Naive thymus-derived CD4-positive, alpha-beta T cell (primary cell): ENCODE measurements at regions of chr10 and their contacts with region 1.

Region 1: DNA sequence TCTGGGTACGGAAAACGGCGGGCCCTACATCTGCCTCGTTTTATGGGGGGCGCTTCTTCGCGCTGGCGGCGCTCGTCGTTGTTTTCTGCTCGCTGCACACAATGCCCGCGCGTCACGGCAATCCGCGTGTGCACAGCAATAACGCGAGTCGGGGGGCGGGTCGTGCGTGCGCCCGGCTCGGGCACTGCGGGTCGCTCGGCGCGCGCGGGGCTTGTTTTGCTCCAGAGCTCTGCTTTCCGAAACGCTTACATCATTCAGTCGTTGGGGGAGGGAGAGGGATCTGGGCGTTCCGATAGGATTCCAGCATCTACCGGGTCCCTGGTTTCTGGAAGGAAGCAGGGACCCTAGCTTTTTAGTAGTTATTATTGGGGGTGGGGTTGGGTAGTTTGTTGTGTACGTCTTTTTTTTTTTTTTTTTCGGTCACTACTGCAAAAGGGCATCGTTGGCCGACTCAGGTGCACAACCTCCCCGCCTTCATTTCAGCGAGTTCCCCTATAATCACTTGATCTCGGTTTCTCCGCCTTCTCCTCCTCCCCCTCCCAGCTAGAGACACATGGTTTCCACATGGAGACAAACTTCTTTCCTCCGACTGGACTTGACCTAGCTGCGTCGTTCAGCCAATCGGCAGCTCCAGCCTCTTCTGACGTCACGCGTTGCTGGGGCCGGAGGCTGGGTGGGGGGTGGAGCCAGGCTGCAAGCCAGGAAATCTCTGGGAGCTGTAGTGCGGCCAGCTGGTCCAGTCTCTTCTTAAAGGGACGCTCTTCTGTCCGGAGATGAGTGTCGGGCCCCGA is 3.5 kb downstream of the MXI1 start:
- DNase-seq: peak; percentile 81 to 92 (median 89)
- ATAC-seq: peak; percentile 76
- H3K4me3 ChIP-seq: peak overlapping the region; percentile 69
- H3K4me3 Mint-ChIP-seq: peak overlapping the region; percentile 93 to 99 (median 97)
- H3K27ac ChIP-seq: peak overlapping the region; percentile 95
- H3K27ac Mint-ChIP-seq: peak overlapping the region; percentile 95 to 99 (median 98)
- H3K4me1 ChIP-seq: peaks cover 21 to 46% of the 10 kb centered on the region in 2 donors
- H3K4me1 Mint-ChIP-seq: peaks cover 34 to 64% (median 57%) of the 10 kb centered on the region in 7 donors
- H3K27me3 ChIP-seq: no peaks in the 10 kb centered on the region
- H3K27me3 Mint-ChIP-seq: peaks cover 0 to 10% (median 7%) of the 10 kb centered on the region in 5 donors

Region 2: DNA sequence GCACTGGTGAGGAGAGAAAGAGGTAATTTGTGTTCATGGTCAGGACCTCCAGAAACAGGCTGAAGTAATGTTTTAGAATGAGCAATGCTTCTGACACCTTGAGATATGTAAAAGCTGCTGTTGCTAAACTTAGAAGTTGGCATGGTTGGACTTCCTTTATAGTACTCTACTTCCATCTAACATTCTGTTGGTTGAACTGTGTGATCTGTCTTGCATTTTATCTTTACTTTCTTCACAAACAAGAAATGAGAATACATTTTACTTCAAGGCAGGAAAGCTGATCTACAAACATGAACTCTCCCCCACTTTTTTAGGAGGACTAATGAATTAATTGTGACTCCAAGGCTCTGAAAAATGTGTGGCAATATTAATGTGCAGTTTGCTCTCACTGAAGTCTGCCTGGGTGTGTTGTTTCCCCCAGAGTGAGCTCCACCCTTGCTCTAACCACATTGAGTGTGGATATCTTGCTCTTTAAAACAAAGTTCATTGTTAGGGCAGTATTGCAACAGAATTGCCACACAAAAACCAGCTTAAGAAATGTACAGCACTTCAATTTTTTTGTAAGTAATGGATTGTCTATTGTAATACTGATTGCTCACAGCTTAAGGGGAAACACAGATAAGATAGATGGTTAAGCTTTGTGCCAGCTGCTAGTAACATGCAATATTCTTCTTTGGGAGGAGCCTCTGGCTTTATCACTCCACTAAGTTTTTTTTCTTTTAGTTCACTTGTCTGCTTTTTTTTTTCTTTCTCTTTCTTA is 134.1 kb before region 1 on chr10:
- CTCF ChIA-PET with region 1: interaction called, 3 read pairs
- POLR2A ChIA-PET with region 1: interaction called, 5 read pairs
- intact Hi-C with region 1: loop called (anchors 2 to 5 kb)
- DNase-seq: peak in 7 of 9 donors; percentile 47 to 74 (median 60)
- ATAC-seq: peak; percentile 85
- H3K4me3 ChIP-seq: peak overlapping the region; percentile 21
- H3K4me3 Mint-ChIP-seq: peak overlapping the region; percentile 73 to 92 (median 86)
- H3K27ac ChIP-seq: peak overlapping the region; percentile 56
- H3K27ac Mint-ChIP-seq: peak overlapping the region; percentile 79 to 97 (median 94)
- H3K4me1 ChIP-seq: peaks cover 69 to 84% of the 10 kb centered on the region in 2 donors
- H3K4me1 Mint-ChIP-seq: peaks cover 64 to 97% (median 87%) of the 10 kb centered on the region in 7 donors
- H3K27me3 ChIP-seq: no peaks in the 10 kb centered on the region
- H3K27me3 Mint-ChIP-seq: no peaks in the 10 kb centered on the region

Region 3: DNA sequence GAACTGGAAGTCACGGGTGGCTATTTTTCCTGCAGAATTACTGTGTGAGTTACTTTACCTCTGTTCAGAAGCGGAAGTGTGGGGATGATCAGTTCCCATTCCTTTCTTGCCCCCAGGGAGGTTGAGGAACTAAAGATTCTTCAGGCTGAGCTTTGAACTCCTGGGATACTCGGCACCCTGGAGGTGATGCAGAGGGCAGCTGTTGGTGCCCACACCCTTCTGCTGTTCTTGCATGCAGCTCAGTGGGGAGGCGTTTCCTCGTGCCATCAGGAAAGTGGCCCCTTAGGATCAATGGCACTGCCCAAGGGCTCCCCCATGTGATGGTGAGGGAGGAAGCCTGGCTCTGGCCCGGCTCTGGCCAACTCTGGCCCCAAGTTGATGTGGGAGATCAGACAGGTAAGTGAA is 48.1 kb before region 1 on chr10:
- CTCF ChIA-PET with region 1: interaction called, 4 read pairs
- POLR2A ChIA-PET with region 1: interaction called, 41 read pairs
- intact Hi-C with region 1: loop called (anchors 1 to 2 kb)
- DNase-seq: no peak
- ATAC-seq: no peak
- H3K4me3 ChIP-seq: no peak overlapping the region
- H3K4me3 Mint-ChIP-seq: no peak overlapping the region
- H3K27ac ChIP-seq: no peak overlapping the region
- H3K27ac Mint-ChIP-seq: no peak overlapping the region
- H3K4me1 ChIP-seq: peaks cover 0 to 7% of the 10 kb centered on the region in 2 donors
- H3K4me1 Mint-ChIP-seq: peaks cover 0 to 11% (median 3%) of the 10 kb centered on the region in 7 donors
- H3K27me3 ChIP-seq: peaks cover 0 to 24% of the 10 kb centered on the region in 2 donors
- H3K27me3 Mint-ChIP-seq: peaks cover 38 to 93% (median 51%) of the 10 kb centered on the region in 5 donors

Region 4: DNA sequence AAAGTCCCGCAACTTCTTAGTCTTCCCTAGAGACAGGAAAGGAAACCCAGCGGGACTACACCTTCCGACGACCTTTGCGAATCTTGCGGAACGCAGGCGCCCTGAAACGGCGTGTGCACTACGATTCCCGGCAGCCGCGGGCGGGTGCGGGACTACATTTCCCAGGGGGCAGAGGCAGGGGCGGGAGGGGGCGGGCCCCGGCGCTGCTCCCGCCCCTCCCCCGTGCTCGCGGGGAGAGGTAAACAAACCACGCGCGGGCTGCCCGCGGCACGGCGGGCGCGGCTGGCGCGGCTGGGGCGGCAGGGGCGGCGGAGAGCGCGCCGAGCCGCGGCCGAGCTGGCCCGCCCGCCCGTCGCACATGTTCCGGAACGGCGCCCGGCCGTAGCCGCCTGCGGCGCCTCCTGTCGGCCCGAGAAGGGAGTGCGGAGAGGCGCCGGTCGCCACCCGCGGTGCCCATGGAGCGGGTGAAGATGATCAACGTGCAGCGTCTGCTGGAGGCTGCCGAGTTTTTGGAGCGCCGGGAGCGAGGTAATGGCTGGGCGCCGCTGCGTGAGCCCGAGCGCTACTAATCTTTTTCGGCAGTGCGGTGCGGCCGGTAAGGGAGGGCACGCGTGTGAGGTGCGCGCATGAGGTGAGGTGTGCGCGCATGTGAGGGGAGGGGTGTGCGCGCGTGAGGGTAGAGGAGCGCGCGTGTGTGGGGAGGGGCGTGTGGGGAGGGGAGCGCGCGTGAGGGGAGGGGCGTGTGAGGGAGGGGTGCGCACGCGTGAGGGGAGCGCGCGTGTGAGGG is 15.1 kb after region 1 on chr10:
- CTCF ChIA-PET with region 1: interaction called, 95 read pairs
- POLR2A ChIA-PET with region 1: interaction called, 353 read pairs
- intact Hi-C with region 1: loop called (anchors 1 kb)
- DNase-seq: peak; percentile 83 to 91 (median 88)
- ATAC-seq: peak; percentile 73
- H3K4me3 ChIP-seq: peak overlapping the region; percentile 75
- H3K4me3 Mint-ChIP-seq: peak overlapping the region; percentile 87 to 99 (median 94)
- H3K27ac ChIP-seq: peak overlapping the region; percentile 92
- H3K27ac Mint-ChIP-seq: peak overlapping the region; percentile 78 to 97 (median 96)
- H3K4me1 ChIP-seq: peaks cover 16 to 27% of the 10 kb centered on the region in 2 donors
- H3K4me1 Mint-ChIP-seq: peaks cover 27 to 68% (median 49%) of the 10 kb centered on the region in 7 donors
- H3K27me3 ChIP-seq: no peaks in the 10 kb centered on the region
- H3K27me3 Mint-ChIP-seq: no peaks in the 10 kb centered on the region

Region 5: DNA sequence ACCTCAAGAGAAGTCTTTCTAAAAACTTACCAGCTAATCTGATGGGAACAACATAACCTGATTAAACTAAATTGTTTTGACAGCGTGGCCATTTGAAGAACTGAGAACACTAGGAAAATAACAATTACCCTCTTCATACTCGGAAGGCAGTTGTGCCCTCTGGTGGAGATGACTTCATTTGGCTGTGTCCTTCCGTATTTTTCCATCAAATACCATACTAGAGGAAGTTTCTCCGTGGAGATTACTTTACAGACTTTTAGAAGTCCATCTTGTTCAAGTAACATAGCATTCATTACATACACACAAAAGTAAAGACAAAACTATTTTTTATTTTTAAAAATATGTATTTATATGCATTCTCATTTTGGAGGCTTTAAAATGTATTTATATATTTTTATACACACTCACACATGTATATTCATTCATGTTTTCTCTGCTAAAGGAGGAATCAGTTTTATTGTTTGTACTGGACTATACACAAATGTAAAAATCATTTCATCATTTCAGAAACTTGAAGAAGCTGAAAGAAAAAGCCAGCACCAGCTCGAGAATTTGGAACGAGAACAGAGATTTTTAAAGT is 68.6 kb after region 1 on chr10:
- CTCF ChIA-PET with region 1: interaction called, 31 read pairs
- POLR2A ChIA-PET with region 1: interaction called, 26 read pairs
- intact Hi-C with region 1: loop called (anchors 1 to 2 kb)
- DNase-seq: peak in 7 of 9 donors; percentile 37 to 61 (median 56)
- ATAC-seq: peak; percentile 82
- H3K4me3 ChIP-seq: no peak overlapping the region
- H3K4me3 Mint-ChIP-seq: peak overlapping the region in 5 of 10 donors; percentile 4 to 52 (median 48)
- H3K27ac ChIP-seq: no peak overlapping the region
- H3K27ac Mint-ChIP-seq: peak overlapping the region in 3 of 9 donors; percentile 8 to 59 (median 48)
- H3K4me1 ChIP-seq: peaks cover 0 to 6% of the 10 kb centered on the region in 2 donors
- H3K4me1 Mint-ChIP-seq: peaks cover 14 to 42% (median 21%) of the 10 kb centered on the region in 7 donors
- H3K27me3 ChIP-seq: no peaks in the 10 kb centered on the region
- H3K27me3 Mint-ChIP-seq: peaks cover 0 to 22% (median 0%) of the 10 kb centered on the region in 5 donors

Region 6: GRCh38 chr10:110502851-110503301 is 292.0 kb after region 1 on chr10:
- CTCF ChIA-PET with region 1: no interaction called
- POLR2A ChIA-PET with region 1: no interaction called
- intact Hi-C with region 1: loop called in 1 of 2 experiments (anchors 2 kb)
- DNase-seq: peak in 1 of 9 donors; percentile 18
- ATAC-seq: peak; percentile 10
- H3K4me3 ChIP-seq: peak overlapping the region; percentile 17
- H3K4me3 Mint-ChIP-seq: peak overlapping the region; percentile 15 to 97 (median 70)
- H3K27ac ChIP-seq: peak overlapping the region; percentile 53
- H3K27ac Mint-ChIP-seq: peak overlapping the region; percentile 53 to 94 (median 81)
- H3K4me1 ChIP-seq: peaks cover 42 to 70% of the 10 kb centered on the region in 2 donors
- H3K4me1 Mint-ChIP-seq: peaks cover 55 to 88% (median 60%) of the 10 kb centered on the region in 7 donors
- H3K27me3 ChIP-seq: no peaks in the 10 kb centered on the region
- H3K27me3 Mint-ChIP-seq: peaks cover 0 to 3% (median 0%) of the 10 kb centered on the region in 5 donors

Region 7: DNA sequence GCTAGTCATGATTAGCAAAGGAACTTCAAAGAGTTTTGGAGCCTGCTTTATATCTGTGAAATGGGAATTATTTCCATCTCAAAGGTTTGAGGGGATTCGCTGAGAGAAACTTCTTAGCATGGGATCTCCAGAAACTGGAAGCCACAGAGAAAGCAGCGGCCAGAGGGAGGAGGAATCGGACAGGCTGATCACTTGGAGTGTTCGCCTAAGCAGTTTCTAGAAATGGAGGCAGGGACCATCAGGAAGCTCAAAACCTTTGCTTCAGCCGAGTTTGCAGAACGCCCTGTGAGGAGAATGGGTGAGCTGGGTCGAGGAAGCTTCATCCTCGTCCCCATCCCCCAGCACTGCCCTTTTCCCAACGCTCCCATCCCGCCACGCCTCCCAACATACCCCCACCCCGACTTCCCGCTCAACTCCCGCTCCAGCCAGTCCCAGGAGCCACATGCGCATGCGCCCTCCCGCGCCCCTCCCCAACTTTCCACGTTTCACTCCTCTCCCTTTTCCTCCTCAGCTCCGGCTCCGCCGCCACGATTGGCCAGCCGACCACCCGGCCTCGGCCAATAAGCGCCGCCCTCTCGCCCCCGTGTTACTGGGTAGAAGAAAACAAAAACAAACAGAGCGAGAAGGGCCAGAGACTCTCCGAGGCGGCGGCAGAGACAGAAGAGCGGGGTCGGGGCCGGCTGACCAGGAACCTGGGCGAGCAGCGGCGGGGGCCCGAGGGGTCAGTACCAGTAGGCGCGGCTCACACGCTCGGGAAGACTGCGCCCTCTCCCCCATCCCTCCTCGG is 660.6 kb after region 1 on chr10 and contains the start of gene PDCD4:
- CTCF ChIA-PET with region 1: no interaction called
- POLR2A ChIA-PET with region 1: interaction called, 3 read pairs
- intact Hi-C with region 1: loop called (anchors 2 to 5 kb)
- DNase-seq: peak; percentile 83 to 98 (median 90)
- ATAC-seq: peak; percentile 78
- H3K4me3 ChIP-seq: peak within 1 kb of the TSS; percentile 78
- H3K4me3 Mint-ChIP-seq: peak within 1 kb of the TSS; percentile 79 to 99 (median 96)
- H3K27ac ChIP-seq: peak within 1 kb of the TSS; percentile 100
- H3K27ac Mint-ChIP-seq: peak within 1 kb of the TSS; percentile 95 to 100 (median 99)
- H3K4me1 ChIP-seq: peaks cover 53 to 71% of the 10 kb centered on the region in 2 donors
- H3K4me1 Mint-ChIP-seq: peaks cover 43 to 77% (median 68%) of the 10 kb centered on the region in 7 donors
- H3K27me3 ChIP-seq: no peaks in the 10 kb centered on the region
- H3K27me3 Mint-ChIP-seq: peaks cover 0 to 2% (median 0%) of the 10 kb centered on the region in 5 donors
- total RNA-seq, gene PDCD4: 93.7 to 283 (median 223) TPM